Ovary (tissue), 10 donors: ENCODE measurements at regions of chr3 and their contacts with region 1.

Region 1: GRCh38 chr3:180912304-180913296 is at the start of gene FXR1:
- DNase-seq: peak; percentile 82 to 90 (median 86)
- H3K4me3 ChIP-seq: peak within 1 kb of the TSS; percentile 96
- H3K27ac ChIP-seq: peak within 1 kb of the TSS; percentile 74 to 91
- H3K4me1 ChIP-seq: peaks cover 1% of the 10 kb centered on the region
- H3K27me3 ChIP-seq: no peaks in the 10 kb centered on the region
- CTCF ChIP-seq: peak; percentile 60 to 70 (median 61)
- EP300 ChIP-seq: no peak
- POLR2A ChIP-seq: peak; percentile 55
- total RNA-seq, gene FXR1: 109 to 176 (median 137) TPM

Region 2: GRCh38 chr3:179088306-179088705 is 1824.3 kb before region 1 on chr3:
- intact Hi-C with region 1: loop called in 1 of 4 experiments (anchors 5 kb)
- DNase-seq: no peak
- H3K4me3 ChIP-seq: no peak overlapping the region
- H3K27ac ChIP-seq: no peak overlapping the region
- H3K4me1 ChIP-seq: no peaks in the 10 kb centered on the region
- H3K27me3 ChIP-seq: no peaks in the 10 kb centered on the region
- CTCF ChIP-seq: no peak
- EP300 ChIP-seq: no peak
- POLR2A ChIP-seq: no peak

Region 3: DNA sequence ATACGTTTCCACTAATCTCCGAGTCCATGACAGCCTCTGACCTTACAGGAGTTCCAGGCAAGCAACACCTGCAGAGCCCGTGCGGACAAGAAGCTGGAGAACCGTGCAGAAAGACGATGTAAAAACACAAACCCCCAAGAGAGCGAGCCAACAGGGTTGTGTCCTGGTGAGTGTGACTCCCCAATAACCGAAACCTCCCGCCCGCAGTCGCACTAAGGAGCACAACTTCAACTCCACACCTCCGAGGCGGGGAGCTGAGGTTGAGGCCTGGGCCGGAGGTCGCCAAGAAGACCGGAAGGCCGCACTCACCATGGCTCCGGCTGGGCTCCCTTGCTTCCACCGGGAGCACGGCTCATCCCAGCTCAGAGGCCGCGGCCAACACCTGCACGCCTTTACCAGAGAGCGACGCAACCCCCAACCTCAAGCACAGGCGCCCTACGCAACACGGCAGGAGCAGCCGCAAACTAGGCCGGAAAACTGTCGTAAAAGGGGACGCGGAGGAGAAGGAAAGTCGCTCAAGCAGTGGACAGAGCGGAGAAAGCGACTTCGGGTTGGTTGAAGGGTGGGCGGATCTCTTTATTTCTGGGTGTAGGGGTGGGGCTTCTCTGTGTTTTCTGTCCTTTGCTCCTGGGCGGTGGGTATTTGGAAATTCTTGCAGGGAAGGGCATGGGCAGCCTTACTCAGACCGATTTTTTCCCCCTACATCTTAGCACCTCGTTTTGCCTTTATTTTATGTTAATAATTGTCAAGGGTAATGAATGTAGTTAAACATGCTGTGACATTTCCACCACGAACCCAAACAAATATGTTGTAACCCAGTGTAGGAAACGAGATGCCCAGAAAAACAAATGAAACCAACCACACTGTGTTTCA is 76.9 kb after region 1 on chr3 and contains the start of gene DNAJC19:
- intact Hi-C with region 1: loop called in 1 of 4 experiments (anchors 5 kb)
- DNase-seq: peak; percentile 89 to 91 (median 91)
- H3K4me3 ChIP-seq: peak within 1 kb of the TSS; percentile 79
- H3K27ac ChIP-seq: peak within 1 kb of the TSS; percentile 78 to 84
- H3K4me1 ChIP-seq: peaks cover 4% of the 10 kb centered on the region
- H3K27me3 ChIP-seq: no peaks in the 10 kb centered on the region
- CTCF ChIP-seq: no peak
- EP300 ChIP-seq: no peak
- POLR2A ChIP-seq: peak; percentile 79
- total RNA-seq, gene DNAJC19: 43.1 to 64.4 (median 45.5) TPM

Region 4: DNA sequence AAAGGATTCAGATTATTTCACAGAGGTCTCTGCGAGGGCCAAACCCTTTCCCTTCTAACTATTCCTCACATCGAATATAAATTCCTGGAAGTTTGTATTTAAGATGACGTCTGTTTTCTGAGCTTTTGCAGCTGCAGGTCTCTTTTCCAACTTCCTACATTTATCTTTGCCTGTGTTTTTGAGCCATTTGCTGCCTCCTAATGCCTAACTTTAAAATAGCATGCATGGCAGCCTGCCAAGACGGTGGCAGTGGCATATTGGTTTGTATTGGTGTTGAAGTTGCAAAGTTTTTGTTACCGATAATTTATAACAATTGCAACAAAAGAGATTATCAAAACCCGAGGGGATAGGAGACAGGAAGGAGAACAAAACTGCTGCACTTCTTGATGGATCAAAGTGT is 264.0 kb after region 1 on chr3:
- intact Hi-C with region 1: no loop called
- DNase-seq: peak; percentile 22 to 59 (median 50)
- H3K4me3 ChIP-seq: no peak overlapping the region
- H3K27ac ChIP-seq: no peak overlapping the region
- H3K4me1 ChIP-seq: no peaks in the 10 kb centered on the region
- H3K27me3 ChIP-seq: no peaks in the 10 kb centered on the region
- CTCF ChIP-seq: peak in 1 of 3 donors; percentile 41
- EP300 ChIP-seq: no peak
- POLR2A ChIP-seq: no peak